PC-3 (cell line): ENCODE measurements at regions of chr7 and their contacts with region 1.

Region 1: GRCh38 chr7:100049441-100050311 is at the start of gene ZSCAN21:
- DNase-seq: peak; percentile 64
- ATAC-seq: peak; percentile 77
- H3K4me3 ChIP-seq: peak within 1 kb of the TSS; percentile 85
- H3K27ac ChIP-seq: peak within 1 kb of the TSS; percentile 52
- H3K4me1 ChIP-seq: peaks cover 13% of the 10 kb centered on the region
- H3K27me3 ChIP-seq: no peaks in the 10 kb centered on the region
- CTCF ChIP-seq: peak; percentile 31; the same call in 1 of the 2 replicates
- total RNA-seq, gene ZSCAN21: 4.7 and 7.3 TPM in 2 replicates

Region 2: GRCh38 chr7:99910976-99911375 is 138.7 kb before region 1 on chr7:
- CTCF ChIA-PET with region 1: interaction called, 5 read pairs
- POLR2A ChIA-PET with region 1: no interaction called
- intact Hi-C with region 1: loop called (anchors 1 kb)
- DNase-seq: no peak
- ATAC-seq: no peak
- H3K4me3 ChIP-seq: no peak overlapping the region
- H3K27ac ChIP-seq: no peak overlapping the region
- H3K4me1 ChIP-seq: no peaks in the 10 kb centered on the region
- H3K27me3 ChIP-seq: no peaks in the 10 kb centered on the region
- CTCF ChIP-seq: no peak

Region 3: DNA sequence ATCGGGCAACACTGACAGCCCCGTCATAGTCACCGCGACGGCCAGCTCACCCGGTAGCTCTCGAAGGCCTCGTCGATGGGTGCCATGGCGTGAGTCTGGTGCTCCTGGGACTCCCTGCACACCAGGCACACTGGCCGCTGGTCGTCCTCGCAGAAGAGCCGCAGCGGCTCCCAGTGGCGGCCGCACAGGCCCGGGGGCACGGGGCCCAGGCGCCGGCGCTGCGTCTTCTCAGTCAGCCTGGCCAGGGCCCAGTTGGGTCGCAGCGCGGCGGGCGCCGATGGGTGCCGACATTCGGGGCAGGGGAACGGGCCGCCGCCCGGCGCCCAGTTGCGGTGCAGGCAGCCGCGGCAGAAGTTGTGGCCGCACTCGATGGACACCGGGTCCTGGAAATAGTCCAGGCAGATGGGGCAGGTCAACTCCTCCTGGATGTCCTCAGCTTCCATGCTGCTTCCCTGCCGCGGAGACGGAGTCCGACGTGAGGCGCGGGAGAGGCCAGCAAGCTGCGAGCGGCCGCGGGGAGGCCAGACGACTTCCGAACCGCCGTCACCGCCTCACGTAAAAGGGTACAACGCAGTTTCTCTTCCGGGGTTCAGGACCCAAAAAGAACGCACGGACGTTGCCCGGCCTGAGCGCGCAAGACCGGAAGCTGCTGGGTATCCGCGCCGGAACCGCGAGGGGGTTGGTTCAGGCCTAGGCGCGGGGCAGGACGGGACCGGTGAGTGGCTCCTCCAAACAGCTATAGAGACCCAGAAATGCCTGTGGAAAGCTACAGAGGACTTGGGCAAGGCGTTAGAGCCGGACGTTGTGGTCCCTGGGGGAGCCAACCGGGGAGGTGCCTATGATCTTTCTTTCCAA is 130.5 kb before region 1 on chr7 and contains the start of gene TRIM4:
- CTCF ChIA-PET with region 1: no interaction called
- POLR2A ChIA-PET with region 1: no interaction called
- intact Hi-C with region 1: loop called (anchors 2 kb)
- DNase-seq: peak; percentile 83
- ATAC-seq: peak; percentile 99
- H3K4me3 ChIP-seq: peak within 1 kb of the TSS; percentile 94
- H3K27ac ChIP-seq: peak within 1 kb of the TSS; percentile 47
- H3K4me1 ChIP-seq: peaks cover 16% of the 10 kb centered on the region
- H3K27me3 ChIP-seq: no peaks in the 10 kb centered on the region
- CTCF ChIP-seq: peak; percentile 5; the same call in 1 of the 2 replicates
- total RNA-seq, gene TRIM4: 11.1 and 13.9 TPM in 2 replicates

Region 4: GRCh38 chr7:99990460-99990852 is 59.2 kb before region 1 on chr7:
- CTCF ChIA-PET with region 1: interaction called, 11 read pairs
- POLR2A ChIA-PET with region 1: no interaction called
- intact Hi-C with region 1: loop called (anchors 1 kb)
- DNase-seq: no peak
- ATAC-seq: no peak
- H3K4me3 ChIP-seq: no peak overlapping the region; the same call in 1 of the 2 replicates
- H3K27ac ChIP-seq: no peak overlapping the region
- H3K4me1 ChIP-seq: 0 out of 2 replicates have a peak, but pooled peaks cover 5% of the 10 kb centered on the region
- H3K27me3 ChIP-seq: peaks cover 5% of the 10 kb centered on the region; the same call in 1 of the 2 replicates
- CTCF ChIP-seq: no peak

Region 5: DNA sequence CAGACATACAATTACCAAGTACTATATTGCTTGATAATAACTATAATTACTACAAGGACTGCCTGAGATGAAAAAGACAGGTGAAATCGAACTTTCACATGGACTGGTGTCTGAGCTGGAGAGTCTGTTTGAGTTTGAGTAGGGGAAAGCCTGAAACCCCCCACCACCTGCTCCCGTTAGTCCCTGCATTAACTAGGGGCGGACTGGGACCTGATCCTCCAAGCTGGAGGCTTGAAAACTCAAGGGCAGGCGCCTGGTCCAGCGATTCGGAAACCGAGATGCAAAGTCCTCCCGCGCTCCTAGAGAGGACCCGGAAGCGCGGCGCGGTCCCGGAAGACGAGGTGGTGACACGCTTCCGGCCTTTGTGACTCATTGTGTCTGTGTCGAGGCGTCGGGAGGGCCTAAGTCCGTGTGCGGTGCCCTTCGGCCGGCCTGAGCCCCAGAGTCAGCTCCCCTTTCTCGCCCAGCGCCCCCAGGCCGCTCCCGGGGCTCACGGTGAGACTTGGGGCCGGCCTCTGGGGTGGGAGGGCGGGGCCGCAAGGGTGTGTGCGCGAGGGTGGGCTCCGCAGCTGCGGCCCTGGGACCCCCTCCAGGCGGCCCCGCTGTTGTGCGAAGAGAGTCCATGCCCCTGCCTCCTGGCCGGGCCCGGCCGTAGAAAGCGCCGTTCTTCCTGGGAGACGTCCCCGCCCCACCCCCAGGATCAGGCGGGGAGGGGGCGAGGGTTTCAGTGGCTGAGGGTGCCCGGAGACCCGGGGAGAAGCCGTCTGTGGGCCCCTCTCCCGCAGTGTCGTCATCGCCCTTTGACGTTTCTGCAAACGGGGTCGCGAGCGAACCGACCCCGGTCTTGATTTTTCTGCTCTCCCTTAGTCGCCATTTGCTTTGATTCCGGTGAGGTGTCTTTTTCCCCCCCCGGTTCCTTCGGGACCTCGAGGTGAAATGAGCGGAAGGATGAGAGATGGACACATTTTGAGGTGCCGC is 34.2 kb before region 1 on chr7 and contains the start of gene ZKSCAN1:
- CTCF ChIA-PET with region 1: no interaction called
- POLR2A ChIA-PET with region 1: no interaction called
- intact Hi-C with region 1: loop called (anchors 1 kb)
- DNase-seq: peak; percentile 87
- ATAC-seq: peak; percentile 93
- H3K4me3 ChIP-seq: peak within 1 kb of the TSS; percentile 97
- H3K27ac ChIP-seq: peak within 1 kb of the TSS; percentile 41
- H3K4me1 ChIP-seq: peaks cover 25% of the 10 kb centered on the region
- H3K27me3 ChIP-seq: no peaks in the 10 kb centered on the region
- CTCF ChIP-seq: no peak
- total RNA-seq, gene ZKSCAN1: 13.6 and 13.9 TPM in 2 replicates

Region 6: DNA sequence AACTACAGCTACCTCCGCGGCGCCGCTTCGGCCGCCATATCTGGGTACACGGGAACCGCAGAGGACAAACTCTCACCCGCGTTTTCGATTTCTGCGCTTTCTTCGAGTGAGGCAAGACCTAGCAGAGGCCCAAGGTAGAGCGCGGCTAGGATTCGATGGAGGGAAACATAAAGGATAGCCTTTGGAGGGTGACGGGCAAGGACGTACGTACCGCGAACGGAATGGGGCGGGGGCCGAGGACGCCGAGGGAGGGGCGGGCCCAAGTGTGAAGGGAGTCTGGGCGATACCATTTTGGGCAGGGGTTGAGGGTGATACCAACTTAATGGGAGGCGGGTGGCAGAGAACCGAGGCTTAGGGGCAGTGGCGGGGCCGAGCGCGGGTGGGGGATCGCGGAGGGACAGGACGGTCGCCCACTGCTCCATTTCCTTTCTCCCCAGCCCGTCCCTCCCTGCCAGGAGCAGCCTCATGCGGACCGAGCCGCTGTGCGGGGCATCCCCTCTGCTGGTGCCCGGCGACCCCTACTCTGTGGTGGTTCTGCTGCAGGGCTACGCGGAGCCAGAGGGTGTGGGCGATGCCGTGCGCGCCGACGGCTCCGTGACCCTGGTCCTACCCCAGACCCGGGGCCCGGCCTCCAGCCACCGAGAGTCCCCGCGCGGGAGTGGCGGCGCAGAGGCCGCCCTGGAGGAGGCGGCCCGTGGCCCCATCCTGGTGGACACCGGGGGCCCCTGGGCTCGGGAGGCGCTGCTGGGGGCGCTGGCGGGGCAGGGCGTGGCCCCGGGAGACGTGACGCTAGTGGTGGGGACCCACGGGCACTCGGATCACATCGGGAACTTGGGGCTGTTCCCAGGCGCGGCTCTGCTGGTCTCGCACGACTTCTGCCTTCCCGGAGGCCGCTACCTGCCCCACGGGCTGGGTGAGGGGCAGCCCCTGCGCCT is 77.5 kb after region 1 on chr7 and contains the start of gene MBLAC1:
- CTCF ChIA-PET with region 1: no interaction called
- POLR2A ChIA-PET with region 1: interaction called, 18 read pairs
- intact Hi-C with region 1: no loop called
- DNase-seq: peak; percentile 85
- ATAC-seq: peak; percentile 65
- H3K4me3 ChIP-seq: peak within 1 kb of the TSS; percentile 80
- H3K27ac ChIP-seq: peak within 1 kb of the TSS; percentile 92
- H3K4me1 ChIP-seq: 0 out of 2 replicates have a peak, but pooled peaks cover 4% of the 10 kb centered on the region
- H3K27me3 ChIP-seq: no peaks in the 10 kb centered on the region
- CTCF ChIP-seq: no peak
- total RNA-seq, gene MBLAC1: 2.7 and 4.3 TPM in 2 replicates